ENCODE measurements at regions of chr10 and their contacts with region 1.

Region 1: GRCh38 chr10:93288654-93289634 is 193.2 kb downstream of the MYOF start:
- DNase-seq: peak; percentile 37 to 69
- ATAC-seq: peak; percentile 83

Region 2: GRCh38 chr10:92356041-92356440 is 932.9 kb before region 1 on chr10:
- intact Hi-C with region 1: no loop called
- DNase-seq: no peak
- ATAC-seq: no peak

Region 3: DNA sequence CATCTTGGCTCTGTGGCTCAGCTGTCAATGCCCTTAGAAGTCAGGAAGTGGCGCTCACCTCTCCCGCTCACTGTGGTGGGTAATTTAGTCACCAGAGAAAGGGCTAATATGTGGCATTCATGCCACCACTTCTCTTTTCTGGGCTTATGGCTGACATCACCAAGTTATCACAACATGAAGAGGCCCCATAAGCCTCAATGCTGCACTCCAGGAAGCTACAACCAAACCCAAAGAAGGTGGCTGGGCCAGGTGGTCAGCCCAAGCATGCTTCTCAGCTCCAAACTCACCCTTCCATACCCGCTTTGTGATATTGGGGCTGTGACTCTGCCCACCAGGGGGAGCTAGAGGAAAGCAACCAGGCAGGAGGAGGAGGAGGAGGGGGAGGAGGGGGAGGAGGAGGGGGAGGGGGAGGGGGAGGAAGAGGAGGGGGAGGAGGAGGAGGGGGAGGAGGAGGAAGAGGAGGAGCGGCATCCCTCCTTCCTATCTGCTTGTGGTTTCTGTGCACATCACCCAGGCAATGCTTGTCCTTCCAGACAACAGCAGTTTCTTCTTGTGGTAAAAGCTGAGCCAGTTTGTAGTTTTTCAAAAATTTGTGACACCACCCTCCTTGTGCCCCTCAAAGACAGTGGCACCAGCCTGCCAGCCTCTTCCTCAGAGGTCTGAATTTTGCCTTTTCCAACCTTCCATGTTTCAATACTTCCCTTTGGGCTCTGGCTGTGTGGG is 173.1 kb before region 1 on chr10:
- intact Hi-C with region 1: loop called in 1 of 2 experiments (anchors 10 kb)
- DNase-seq: peak; percentile 54 to 86
- ATAC-seq: peak; percentile 83

Region 4: GRCh38 chr10:93150289-93150688 is 138.7 kb before region 1 on chr10:
- intact Hi-C with region 1: no loop called
- DNase-seq: no peak
- ATAC-seq: no peak

Region 5: GRCh38 chr10:93697207-93697606 is 408.3 kb after region 1 on chr10:
- intact Hi-C with region 1: no loop called
- DNase-seq: no peak
- ATAC-seq: no peak